ENCODE measurements at regions of chr3 and their contacts with region 1.

Region 1: GRCh38 chr3:150348500-150348899 is 59.6 kb upstream of the TSC22D2 start:
- DNase-seq: peak; percentile 80
- H3K4me3 Mint-ChIP-seq: peak overlapping the region; percentile 36
- H3K27ac Mint-ChIP-seq: peak overlapping the region; percentile 77
- H3K4me1 Mint-ChIP-seq: peaks cover 66% of the 10 kb centered on the region
- H3K27me3 Mint-ChIP-seq: no peaks in the 10 kb centered on the region
- CTCF ChIP-seq: no peak

Region 2: DNA sequence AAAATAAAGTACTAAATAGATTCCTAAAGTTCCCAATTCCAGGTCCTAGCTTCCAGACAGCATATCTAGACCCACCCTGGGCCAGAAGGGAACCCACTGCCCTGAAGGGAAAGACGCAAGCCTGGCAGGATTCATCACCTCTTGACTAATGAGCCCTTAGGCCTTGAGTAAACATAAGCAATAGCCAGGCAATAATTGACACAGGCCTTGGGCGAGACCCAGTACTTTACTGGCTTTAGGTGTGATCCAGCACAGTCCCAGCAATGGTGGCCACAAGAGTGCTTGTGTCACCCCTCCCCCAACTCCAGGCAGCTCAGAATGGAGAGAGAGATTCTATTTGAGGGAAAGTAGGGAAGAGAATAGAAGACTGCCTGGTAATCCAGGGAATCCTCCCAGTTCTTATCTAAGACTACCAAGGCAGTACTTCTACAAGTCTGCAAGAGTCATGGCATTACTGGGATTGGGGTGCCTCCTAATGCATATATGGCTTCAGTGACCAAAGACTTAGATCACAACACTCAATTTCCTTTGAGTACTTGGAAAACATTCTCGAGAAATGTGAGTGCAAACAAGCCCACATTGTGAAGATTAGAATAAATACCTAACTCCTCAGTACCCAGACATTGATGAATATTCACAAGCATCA is 660.3 kb before region 1 on chr3:
- CTCF ChIA-PET with region 1: no interaction called
- intact Hi-C with region 1: no loop called
- DNase-seq: peak; percentile 15
- H3K4me3 Mint-ChIP-seq: no peak overlapping the region
- H3K27ac Mint-ChIP-seq: no peak overlapping the region
- H3K4me1 Mint-ChIP-seq: peaks cover 12% of the 10 kb centered on the region
- H3K27me3 Mint-ChIP-seq: no peaks in the 10 kb centered on the region
- CTCF ChIP-seq: no peak

Region 3: GRCh38 chr3:150210461-150211110 is 137.9 kb before region 1 on chr3:
- CTCF ChIA-PET with region 1: no interaction called
- intact Hi-C with region 1: no loop called
- DNase-seq: no peak
- H3K4me3 Mint-ChIP-seq: no peak overlapping the region
- H3K27ac Mint-ChIP-seq: no peak overlapping the region
- H3K4me1 Mint-ChIP-seq: peaks cover 4% of the 10 kb centered on the region
- H3K27me3 Mint-ChIP-seq: peaks cover 74% of the 10 kb centered on the region
- CTCF ChIP-seq: no peak

Region 4: GRCh38 chr3:150286390-150287147 is 61.9 kb before region 1 on chr3:
- CTCF ChIA-PET with region 1: no interaction called
- intact Hi-C with region 1: loop called (anchors 1 kb)
- DNase-seq: peak; percentile 45
- H3K4me3 Mint-ChIP-seq: no peak overlapping the region
- H3K27ac Mint-ChIP-seq: no peak overlapping the region
- H3K4me1 Mint-ChIP-seq: peaks cover 7% of the 10 kb centered on the region
- H3K27me3 Mint-ChIP-seq: no peaks in the 10 kb centered on the region
- CTCF ChIP-seq: peak; percentile 69

Region 5: GRCh38 chr3:150314248-150315004 is 34.1 kb before region 1 on chr3:
- CTCF ChIA-PET with region 1: interaction called, 11 read pairs
- intact Hi-C with region 1: loop called (anchors 1 kb)
- DNase-seq: peak; percentile 84
- H3K4me3 Mint-ChIP-seq: peak overlapping the region; percentile 38
- H3K27ac Mint-ChIP-seq: peak overlapping the region; percentile 90
- H3K4me1 Mint-ChIP-seq: peaks cover 81% of the 10 kb centered on the region
- H3K27me3 Mint-ChIP-seq: no peaks in the 10 kb centered on the region
- CTCF ChIP-seq: no peak

Region 6: GRCh38 chr3:150371741-150372254 is 23.3 kb after region 1 on chr3:
- CTCF ChIA-PET with region 1: no interaction called
- intact Hi-C with region 1: loop called (anchors 1 kb)
- DNase-seq: peak; percentile 91
- H3K4me3 Mint-ChIP-seq: peak overlapping the region; percentile 62
- H3K27ac Mint-ChIP-seq: peak overlapping the region; percentile 94
- H3K4me1 Mint-ChIP-seq: peaks cover 63% of the 10 kb centered on the region
- H3K27me3 Mint-ChIP-seq: no peaks in the 10 kb centered on the region
- CTCF ChIP-seq: no peak

Region 7: GRCh38 chr3:150469943-150470738 is 121.6 kb after region 1 on chr3:
- CTCF ChIA-PET with region 1: no interaction called
- intact Hi-C with region 1: loop called (anchors 5 kb)
- DNase-seq: peak; percentile 67
- H3K4me3 Mint-ChIP-seq: peak overlapping the region; percentile 43
- H3K27ac Mint-ChIP-seq: peak overlapping the region; percentile 81
- H3K4me1 Mint-ChIP-seq: peaks cover 39% of the 10 kb centered on the region
- H3K27me3 Mint-ChIP-seq: no peaks in the 10 kb centered on the region
- CTCF ChIP-seq: no peak

Region 8: GRCh38 chr3:150721285-150722130 is 373.0 kb after region 1 on chr3:
- CTCF ChIA-PET with region 1: no interaction called
- intact Hi-C with region 1: no loop called
- DNase-seq: no peak
- H3K4me3 Mint-ChIP-seq: no peak overlapping the region
- H3K27ac Mint-ChIP-seq: no peak overlapping the region
- H3K4me1 Mint-ChIP-seq: peaks cover 18% of the 10 kb centered on the region
- H3K27me3 Mint-ChIP-seq: no peaks in the 10 kb centered on the region
- CTCF ChIP-seq: peak; percentile 85

Measured in Calu3 (cell line).